HCT116 (cell line): ENCODE measurements at regions of chr13 and their contacts with region 1.

Region 1: GRCh38 chr13:22944378-22944777 is 236.4 kb upstream of the SGCG start:
- DNase-seq: no peak
- ATAC-seq: peak; percentile 86
- H3K4me3 ChIP-seq: no peak overlapping the region
- H3K27ac ChIP-seq: no peak overlapping the region
- H3K4me1 ChIP-seq: no peaks in the 10 kb centered on the region
- H3K27me3 ChIP-seq: no peaks in the 10 kb centered on the region
- CTCF ChIP-seq: peak in 2 of 3 experiments; percentile 51 to 54; a peak in 4 of 6 replicates
- POLR2A ChIP-seq: no peak
- RAD21 ChIP-seq: peak; percentile 11; the same call in 1 of the 2 replicates

Region 2: GRCh38 chr13:23020223-23020843 is 76.0 kb after region 1 on chr13:
- CTCF ChIA-PET with region 1: interaction called, 6 read pairs
- POLR2A ChIA-PET with region 1: no interaction called
- RAD21 ChIA-PET with region 1: interaction called in 1 of 2 experiments, 3 read pairs
- intact Hi-C with region 1: loop called (anchors 10 kb)
- DNase-seq: peak; percentile 61
- ATAC-seq: peak; percentile 100
- H3K4me3 ChIP-seq: no peak overlapping the region
- H3K27ac ChIP-seq: no peak overlapping the region
- H3K4me1 ChIP-seq: no peaks in the 10 kb centered on the region
- H3K27me3 ChIP-seq: no peaks in the 10 kb centered on the region
- CTCF ChIP-seq: peak; percentile 40 to 86 (median 84); a peak in 5 of 6 replicates
- POLR2A ChIP-seq: no peak
- RAD21 ChIP-seq: peak; percentile 49

Region 3: DNA sequence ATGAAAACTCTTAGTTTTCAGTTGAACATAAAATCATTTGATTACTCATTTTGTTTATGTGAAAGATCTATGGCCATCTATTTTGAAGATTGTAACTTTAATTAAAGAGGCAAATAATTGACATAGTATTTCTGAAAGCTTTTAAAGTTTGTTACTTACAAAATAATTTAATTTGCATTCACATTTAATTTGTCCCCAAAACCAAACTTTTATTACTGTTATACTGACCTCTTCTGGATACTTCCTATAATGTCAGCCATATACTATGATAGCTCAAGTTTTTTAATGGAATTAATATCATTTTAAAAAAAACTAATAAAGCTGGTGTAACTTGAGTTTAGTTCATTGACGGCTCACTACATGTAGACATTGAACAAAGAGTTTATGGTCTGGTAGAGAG is 231.5 kb after region 1 on chr13:
- CTCF ChIA-PET with region 1: no interaction called
- POLR2A ChIA-PET with region 1: no interaction called
- RAD21 ChIA-PET with region 1: no interaction called
- intact Hi-C with region 1: loop called (anchors 10 kb)
- DNase-seq: peak; percentile 3
- ATAC-seq: no peak
- H3K4me3 ChIP-seq: no peak overlapping the region
- H3K27ac ChIP-seq: no peak overlapping the region
- H3K4me1 ChIP-seq: no peaks in the 10 kb centered on the region
- H3K27me3 ChIP-seq: no peaks in the 10 kb centered on the region
- CTCF ChIP-seq: peak in 1 of 3 experiments; percentile 51; a peak in 2 of 6 replicates
- POLR2A ChIP-seq: no peak
- RAD21 ChIP-seq: peak; percentile 34

Region 4: GRCh38 chr13:23319883-23320224 is 375.5 kb after region 1 on chr13:
- CTCF ChIA-PET with region 1: no interaction called
- POLR2A ChIA-PET with region 1: no interaction called
- RAD21 ChIA-PET with region 1: no interaction called
- intact Hi-C with region 1: loop called (anchors 5 kb)
- DNase-seq: no peak
- ATAC-seq: no peak
- H3K4me3 ChIP-seq: no peak overlapping the region
- H3K27ac ChIP-seq: no peak overlapping the region
- H3K4me1 ChIP-seq: peaks cover 11 to 15% of the 10 kb centered on the region in 2 experiments
- H3K27me3 ChIP-seq: no peaks in the 10 kb centered on the region
- CTCF ChIP-seq: no peak
- POLR2A ChIP-seq: no peak
- RAD21 ChIP-seq: no peak

Region 5: DNA sequence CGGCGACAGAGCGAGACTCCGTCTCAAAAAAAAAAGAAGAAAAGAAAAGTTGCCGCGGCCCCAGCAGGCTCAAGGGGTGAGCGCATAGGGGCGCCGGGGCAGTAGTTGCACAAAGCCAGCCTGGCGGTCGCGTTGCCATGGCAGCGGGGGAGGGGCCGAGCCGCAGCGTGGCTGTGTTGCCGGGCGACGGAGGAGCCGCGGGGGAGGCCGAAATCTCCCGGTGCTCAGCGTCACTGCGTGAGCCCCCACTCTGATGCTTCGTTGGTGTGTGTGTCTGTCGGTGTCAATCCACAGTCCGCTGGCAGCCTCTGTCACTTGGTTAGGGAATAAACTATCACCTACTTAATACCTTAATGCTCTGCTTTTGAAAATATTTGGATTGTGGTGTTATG is 1035.8 kb after region 1 on chr13:
- CTCF ChIA-PET with region 1: no interaction called
- POLR2A ChIA-PET with region 1: no interaction called
- RAD21 ChIA-PET with region 1: no interaction called
- intact Hi-C with region 1: no loop called
- DNase-seq: no peak
- ATAC-seq: peak; percentile 81
- H3K4me3 ChIP-seq: peak overlapping the region; percentile 40 to 54
- H3K27ac ChIP-seq: no peak overlapping the region
- H3K4me1 ChIP-seq: peaks cover 0 to 13% of the 10 kb centered on the region in 2 experiments; a peak in 2 of 4 replicates
- H3K27me3 ChIP-seq: no peaks in the 10 kb centered on the region; the same call in 1 of the 2 replicates
- CTCF ChIP-seq: no peak
- POLR2A ChIP-seq: no peak
- RAD21 ChIP-seq: no peak